ENCODE measurements at regions of chr17 and their contacts with region 1.

Region 1: GRCh38 chr17:64129764-64130558 is at the start of gene ERN1:
- DNase-seq: peak; percentile 79 to 94
- H3K4me3 ChIP-seq: peak within 1 kb of the TSS; percentile 99
- H3K27ac ChIP-seq: peak within 1 kb of the TSS; percentile 72
- H3K4me1 ChIP-seq: peaks cover 29% of the 10 kb centered on the region
- H3K27me3 ChIP-seq: no peaks in the 10 kb centered on the region
- CTCF ChIP-seq: no peak
- total RNA-seq, gene ERN1: 9.2 and 11.7 TPM in 2 replicates

Region 2: DNA sequence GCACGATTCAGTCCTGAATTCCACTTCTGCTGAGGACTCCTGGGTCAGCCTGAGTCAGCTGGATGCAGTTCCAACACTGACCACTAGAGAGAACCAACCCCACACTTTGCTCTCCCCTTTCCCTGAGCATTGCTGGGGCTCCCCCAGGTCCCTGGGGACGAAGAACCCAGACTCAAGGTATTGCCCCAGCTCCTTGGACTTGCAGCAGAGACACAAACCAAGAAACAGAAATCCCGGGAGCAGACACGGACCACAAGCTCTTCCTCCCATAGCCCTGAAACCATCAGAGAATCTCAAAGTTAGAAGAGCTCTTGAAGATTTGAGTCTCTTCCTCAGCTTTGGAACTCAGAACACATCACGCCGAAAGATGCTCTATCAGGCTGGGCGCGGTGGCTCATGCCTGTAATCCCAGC is 210.6 kb before region 1 on chr17:
- CTCF ChIA-PET with region 1: interaction called, 21 read pairs
- POLR2A ChIA-PET with region 1: no interaction called
- intact Hi-C with region 1: loop called (anchors 1 kb)
- DNase-seq: peak in 1 of 2 experiments; percentile 66
- H3K4me3 ChIP-seq: no peak overlapping the region
- H3K27ac ChIP-seq: no peak overlapping the region
- H3K4me1 ChIP-seq: no peaks in the 10 kb centered on the region
- H3K27me3 ChIP-seq: peaks cover 18% of the 10 kb centered on the region; the same call in 1 of the 2 replicates
- CTCF ChIP-seq: peak; percentile 96

Region 3: GRCh38 chr17:64025732-64026294 is 104.1 kb before region 1 on chr17:
- CTCF ChIA-PET with region 1: interaction called, 71 read pairs
- POLR2A ChIA-PET with region 1: interaction called, 3 read pairs
- intact Hi-C with region 1: loop called (anchors 1 kb)
- DNase-seq: peak; percentile 57 to 77
- H3K4me3 ChIP-seq: peak overlapping the region; percentile 16; the same call in 1 of the 2 replicates
- H3K27ac ChIP-seq: no peak overlapping the region
- H3K4me1 ChIP-seq: 0 out of 2 replicates have a peak, but pooled peaks cover 4% of the 10 kb centered on the region
- H3K27me3 ChIP-seq: no peaks in the 10 kb centered on the region
- CTCF ChIP-seq: peak; percentile 96

Region 4: GRCh38 chr17:64032081-64032480 is 97.9 kb before region 1 on chr17:
- CTCF ChIA-PET with region 1: interaction called, 71 read pairs
- POLR2A ChIA-PET with region 1: interaction called, 3 read pairs
- intact Hi-C with region 1: loop called (anchors 1 kb)
- DNase-seq: no peak
- H3K4me3 ChIP-seq: no peak overlapping the region
- H3K27ac ChIP-seq: no peak overlapping the region
- H3K4me1 ChIP-seq: no peaks in the 10 kb centered on the region
- H3K27me3 ChIP-seq: no peaks in the 10 kb centered on the region
- CTCF ChIP-seq: no peak

Region 5: GRCh38 chr17:64063766-64064224 is 66.2 kb before region 1 on chr17:
- CTCF ChIA-PET with region 1: interaction called, 14 read pairs
- POLR2A ChIA-PET with region 1: no interaction called
- intact Hi-C with region 1: no loop called
- DNase-seq: peak in 1 of 2 experiments; percentile 13
- H3K4me3 ChIP-seq: no peak overlapping the region
- H3K27ac ChIP-seq: no peak overlapping the region
- H3K4me1 ChIP-seq: peaks cover 28% of the 10 kb centered on the region
- H3K27me3 ChIP-seq: no peaks in the 10 kb centered on the region
- CTCF ChIP-seq: peak; percentile 49

Region 6: GRCh38 chr17:64081802-64082799 is 47.9 kb before region 1 on chr17:
- CTCF ChIA-PET with region 1: no interaction called
- POLR2A ChIA-PET with region 1: no interaction called
- intact Hi-C with region 1: loop called (anchors 5 kb)
- DNase-seq: peak; percentile 33 to 99
- H3K4me3 ChIP-seq: peak overlapping the region; percentile 38
- H3K27ac ChIP-seq: peak overlapping the region; percentile 99
- H3K4me1 ChIP-seq: peaks cover 77% of the 10 kb centered on the region
- H3K27me3 ChIP-seq: no peaks in the 10 kb centered on the region
- CTCF ChIP-seq: peak; percentile 20; the same call in 1 of the 2 replicates

Region 7: GRCh38 chr17:64580384-64581315 is 450.7 kb after region 1 on chr17:
- CTCF ChIA-PET with region 1: no interaction called
- POLR2A ChIA-PET with region 1: no interaction called
- intact Hi-C with region 1: no loop called
- DNase-seq: no peak
- H3K4me3 ChIP-seq: no peak overlapping the region
- H3K27ac ChIP-seq: peak overlapping the region; percentile 7; the same call in 1 of the 2 replicates
- H3K4me1 ChIP-seq: no peaks in the 10 kb centered on the region
- H3K27me3 ChIP-seq: no peaks in the 10 kb centered on the region
- CTCF ChIP-seq: no peak

Measured in PC-9 (cell line).